GM12878 (cell line): ENCODE measurements at regions of chr11 and their contacts with region 1.

Region 1: DNA sequence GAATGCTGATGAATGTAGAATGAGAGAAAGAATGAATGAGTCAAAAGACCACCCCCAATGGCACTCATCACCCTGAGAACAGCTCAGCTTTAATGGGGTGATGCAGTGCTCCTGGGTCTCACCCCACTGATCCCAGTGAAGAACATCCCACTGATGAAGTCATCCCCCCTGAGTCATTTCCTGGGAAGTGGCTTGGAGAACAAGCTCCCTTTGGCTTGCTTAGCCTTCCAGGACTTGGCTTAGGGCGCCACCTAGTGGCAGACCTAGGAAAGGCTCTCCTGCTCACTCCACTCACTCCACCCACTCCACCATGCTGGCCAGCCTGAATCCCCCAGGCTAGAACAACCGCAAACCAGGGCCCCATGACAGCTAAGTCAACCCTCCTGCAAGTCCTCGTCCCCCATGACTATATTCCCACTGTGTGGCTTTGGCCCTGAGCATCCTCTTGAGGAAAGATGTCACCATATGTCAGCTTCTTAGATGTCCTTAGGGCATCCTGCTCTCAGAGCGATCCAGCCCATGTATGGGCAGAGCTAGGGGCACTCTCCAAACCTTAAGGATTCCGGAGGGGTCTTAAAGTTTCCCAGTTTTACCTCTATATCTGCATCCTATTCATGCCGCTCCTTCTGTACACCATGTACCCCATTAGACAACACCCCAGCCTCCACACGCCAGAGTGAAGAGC is 17.8 kb upstream of the TMPRSS13 start:
- DNase-seq: no peak
- ATAC-seq: peak; percentile 76
- H3K4me3 ChIP-seq: no peak overlapping the region
- H3K27ac ChIP-seq: no peak overlapping the region
- H3K4me1 ChIP-seq: peaks cover 39% of the 10 kb centered on the region
- H3K27me3 ChIP-seq: no peaks in the 10 kb centered on the region
- CTCF ChIP-seq: peak; percentile 95 to 96 (median 95)
- EP300 ChIP-seq: no peak
- POLR2A ChIP-seq: no peak
- RAD21 ChIP-seq: peak; percentile 94

Region 2: GRCh38 chr11:117426269-117426685 is 520.7 kb before region 1 on chr11:
- CTCF ChIA-PET with region 1: interaction called, 19 read pairs
- POLR2A ChIA-PET with region 1: no interaction called
- RAD21 ChIA-PET with region 1: interaction called, 5 read pairs
- SMC1A ChIA-PET with region 1: no interaction called
- in situ Hi-C with region 1: no loop called
- intact Hi-C with region 1: no loop called
- DNase-seq: no peak
- ATAC-seq: peak; percentile 83
- H3K4me3 ChIP-seq: no peak overlapping the region
- H3K27ac ChIP-seq: no peak overlapping the region
- H3K4me1 ChIP-seq: no peaks in the 10 kb centered on the region
- H3K27me3 ChIP-seq: no peaks in the 10 kb centered on the region
- CTCF ChIP-seq: peak; percentile 96 to 100 (median 98)
- EP300 ChIP-seq: no peak
- POLR2A ChIP-seq: no peak
- RAD21 ChIP-seq: peak; percentile 95

Region 3: DNA sequence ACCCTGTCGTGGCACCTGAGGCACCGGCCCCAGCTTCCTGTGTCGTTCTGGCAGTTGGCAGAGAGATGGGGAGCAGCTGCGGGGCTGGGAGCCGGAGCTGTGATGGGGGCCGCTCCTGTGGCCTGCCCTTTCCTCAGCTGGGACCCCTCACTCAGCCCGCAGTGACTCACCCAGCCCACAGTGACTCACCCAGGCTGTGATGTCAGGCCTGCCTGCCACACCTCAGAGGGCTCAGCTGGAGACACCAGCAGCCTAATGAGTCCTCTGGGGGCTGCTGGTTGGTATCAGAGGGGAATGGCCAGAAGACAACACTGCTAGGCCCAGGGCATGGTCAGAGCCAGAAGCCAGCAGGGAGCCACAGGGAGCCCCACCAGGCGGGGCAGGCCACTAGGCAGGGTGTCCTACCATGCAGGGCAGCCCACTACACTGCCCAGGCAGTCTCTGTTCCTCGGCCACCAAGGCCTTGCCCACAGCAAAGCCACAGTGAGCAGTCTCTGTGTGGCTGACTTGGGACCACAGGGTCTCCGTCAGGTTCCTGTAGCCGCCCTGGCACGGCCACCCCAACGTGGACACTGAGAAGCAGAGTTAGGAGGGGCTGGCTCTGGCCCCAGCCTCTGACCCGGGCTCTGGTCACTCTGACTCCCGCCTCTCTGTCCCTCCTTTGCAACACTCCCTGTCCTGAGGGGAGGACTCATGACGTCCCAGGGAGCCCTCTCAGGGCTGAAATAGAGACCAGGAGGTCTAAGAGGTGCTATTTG is 118.2 kb before region 1 on chr11:
- CTCF ChIA-PET with region 1: interaction called, 503 read pairs
- POLR2A ChIA-PET with region 1: interaction called, 16 read pairs
- RAD21 ChIA-PET with region 1: interaction called, 393 read pairs
- SMC1A ChIA-PET with region 1: interaction called, 183 read pairs
- in situ Hi-C with region 1: no loop called
- intact Hi-C with region 1: no loop called
- DNase-seq: no peak
- ATAC-seq: peak; percentile 92
- H3K4me3 ChIP-seq: no peak overlapping the region
- H3K27ac ChIP-seq: no peak overlapping the region; the same call in 1 of the 2 replicates
- H3K4me1 ChIP-seq: peaks cover 14% of the 10 kb centered on the region
- H3K27me3 ChIP-seq: no peaks in the 10 kb centered on the region
- CTCF ChIP-seq: no peak
- EP300 ChIP-seq: peak; percentile 34 to 54; a peak in 2 of 4 replicates
- POLR2A ChIP-seq: 0 out of 2 replicates have a peak, but pooled peaks have one; percentile 19
- RAD21 ChIP-seq: no peak

Region 4: GRCh38 chr11:117907251-117907981 is 39.6 kb before region 1 on chr11:
- CTCF ChIA-PET with region 1: interaction called, 83 read pairs
- POLR2A ChIA-PET with region 1: interaction called, 6 read pairs
- RAD21 ChIA-PET with region 1: interaction called, 26 read pairs
- SMC1A ChIA-PET with region 1: interaction called, 30 read pairs
- in situ Hi-C with region 1: no loop called
- intact Hi-C with region 1: no loop called
- DNase-seq: peak; percentile 54
- ATAC-seq: peak; percentile 93
- H3K4me3 ChIP-seq: no peak overlapping the region
- H3K27ac ChIP-seq: no peak overlapping the region
- H3K4me1 ChIP-seq: peaks cover 5% of the 10 kb centered on the region; the same call in 1 of the 2 replicates
- H3K27me3 ChIP-seq: no peaks in the 10 kb centered on the region; a peak in 1 of 4 replicates
- CTCF ChIP-seq: no peak
- EP300 ChIP-seq: no peak
- POLR2A ChIP-seq: no peak
- RAD21 ChIP-seq: no peak

Region 5: DNA sequence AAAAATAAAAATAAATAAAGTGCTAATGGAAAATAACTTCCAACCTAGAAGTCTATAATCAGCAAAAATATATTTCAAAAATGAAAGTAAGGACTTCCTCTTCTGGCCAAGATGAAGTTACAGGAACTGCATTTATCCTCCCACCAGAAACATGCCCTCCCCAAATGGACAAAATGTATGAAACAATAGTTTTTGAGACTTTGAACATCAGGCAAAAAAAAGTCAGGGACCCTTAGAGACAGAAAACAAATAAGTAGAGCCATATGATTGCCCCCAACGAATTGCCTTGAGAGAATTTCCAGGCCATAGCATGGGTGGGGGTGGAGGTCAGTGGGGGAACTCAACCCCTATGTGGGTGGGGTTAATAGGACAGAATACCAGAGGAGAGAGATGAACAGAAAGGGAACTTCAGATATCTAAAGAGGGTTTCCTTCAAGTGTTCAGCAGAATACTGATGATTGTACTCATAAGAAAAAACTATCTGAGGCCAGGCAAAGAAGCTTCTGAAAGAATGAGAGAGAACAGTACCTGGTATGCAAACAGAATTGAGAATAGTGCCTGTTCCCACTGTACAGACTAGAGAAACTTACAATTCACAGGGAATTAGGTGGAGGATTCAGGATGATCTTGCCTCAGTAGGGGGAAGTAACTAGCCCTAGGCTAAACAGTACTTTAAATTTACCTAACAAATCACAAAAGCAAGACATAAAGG is 12.6 kb after region 1 on chr11:
- CTCF ChIA-PET with region 1: interaction called, 23 read pairs
- POLR2A ChIA-PET with region 1: interaction called, 5 read pairs
- RAD21 ChIA-PET with region 1: interaction called, 17 read pairs
- SMC1A ChIA-PET with region 1: interaction called, 37 read pairs
- in situ Hi-C with region 1: no loop called
- intact Hi-C with region 1: no loop called
- DNase-seq: no peak
- ATAC-seq: peak; percentile 65
- H3K4me3 ChIP-seq: no peak overlapping the region
- H3K27ac ChIP-seq: peak overlapping the region; percentile 31
- H3K4me1 ChIP-seq: peaks cover 13% of the 10 kb centered on the region
- H3K27me3 ChIP-seq: no peaks in the 10 kb centered on the region
- CTCF ChIP-seq: no peak
- EP300 ChIP-seq: no peak
- POLR2A ChIP-seq: no peak
- RAD21 ChIP-seq: no peak

Region 6: GRCh38 chr11:118002541-118003423 is 55.8 kb after region 1 on chr11:
- CTCF ChIA-PET with region 1: interaction called, 10 read pairs
- POLR2A ChIA-PET with region 1: no interaction called
- RAD21 ChIA-PET with region 1: interaction called, 10 read pairs
- SMC1A ChIA-PET with region 1: interaction called, 29 read pairs
- in situ Hi-C with region 1: no loop called
- intact Hi-C with region 1: no loop called
- DNase-seq: no peak
- ATAC-seq: peak; percentile 6; the same call in 2 of the 3 replicates
- H3K4me3 ChIP-seq: no peak overlapping the region
- H3K27ac ChIP-seq: peak overlapping the region; percentile 38
- H3K4me1 ChIP-seq: peaks cover 70% of the 10 kb centered on the region
- H3K27me3 ChIP-seq: no peaks in the 10 kb centered on the region
- CTCF ChIP-seq: no peak
- EP300 ChIP-seq: no peak
- POLR2A ChIP-seq: no peak
- RAD21 ChIP-seq: no peak